Common myeloid progenitor, CD34-positive (primary cell): ENCODE measurements at regions of chr6 and their contacts with region 1.

Region 1: DNA sequence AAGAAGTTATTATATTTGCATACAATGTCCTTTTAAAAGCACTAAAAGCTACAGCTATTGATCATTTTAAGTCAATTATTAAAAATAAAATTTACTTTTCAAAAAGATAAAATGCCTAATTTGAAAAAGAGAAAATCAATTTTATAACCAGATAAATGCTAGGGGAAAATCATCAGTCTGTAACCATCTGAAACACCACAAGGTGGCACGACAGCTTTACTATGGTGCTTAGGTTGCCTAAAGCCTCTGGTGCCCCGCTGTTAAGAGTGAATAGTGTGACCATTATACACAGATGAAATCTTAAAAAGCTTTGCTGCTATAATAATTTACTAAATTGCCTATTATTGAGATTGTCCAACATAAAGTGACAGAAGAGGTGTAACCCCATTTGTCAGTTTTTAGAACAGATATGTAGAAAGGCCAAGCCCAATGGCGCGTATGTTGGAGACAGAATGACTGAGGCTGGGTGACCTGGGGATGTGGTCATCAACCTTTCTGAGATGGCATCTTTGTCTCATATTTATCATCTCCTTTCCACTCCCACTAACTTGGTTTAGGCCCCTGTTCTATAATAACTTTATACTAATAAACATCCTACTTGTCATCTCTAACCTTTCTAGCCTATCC is 100.8 kb downstream of the MOXD1 start:
- DNase-seq: peak; percentile 44 to 72 (median 71)
- H3K4me3 ChIP-seq: no peak overlapping the region
- H3K27ac ChIP-seq: no peak overlapping the region
- H3K4me1 ChIP-seq: no peaks in the 10 kb centered on the region
- H3K27me3 ChIP-seq: peaks cover 0 to 5% (median 0%) of the 10 kb centered on the region in 5 experiments

Region 2: GRCh38 chr6:132270726-132271402 is 29.6 kb before region 1 on chr6:
- CTCF ChIA-PET with region 1: interaction called, 11 read pairs
- POLR2A ChIA-PET with region 1: no interaction called
- DNase-seq: no peak
- H3K4me3 ChIP-seq: no peak overlapping the region
- H3K27ac ChIP-seq: no peak overlapping the region
- H3K4me1 ChIP-seq: peaks cover 0 to 14% (median 0%) of the 10 kb centered on the region in 4 experiments
- H3K27me3 ChIP-seq: peaks cover 0 to 12% (median 2%) of the 10 kb centered on the region in 5 experiments

Region 3: DNA sequence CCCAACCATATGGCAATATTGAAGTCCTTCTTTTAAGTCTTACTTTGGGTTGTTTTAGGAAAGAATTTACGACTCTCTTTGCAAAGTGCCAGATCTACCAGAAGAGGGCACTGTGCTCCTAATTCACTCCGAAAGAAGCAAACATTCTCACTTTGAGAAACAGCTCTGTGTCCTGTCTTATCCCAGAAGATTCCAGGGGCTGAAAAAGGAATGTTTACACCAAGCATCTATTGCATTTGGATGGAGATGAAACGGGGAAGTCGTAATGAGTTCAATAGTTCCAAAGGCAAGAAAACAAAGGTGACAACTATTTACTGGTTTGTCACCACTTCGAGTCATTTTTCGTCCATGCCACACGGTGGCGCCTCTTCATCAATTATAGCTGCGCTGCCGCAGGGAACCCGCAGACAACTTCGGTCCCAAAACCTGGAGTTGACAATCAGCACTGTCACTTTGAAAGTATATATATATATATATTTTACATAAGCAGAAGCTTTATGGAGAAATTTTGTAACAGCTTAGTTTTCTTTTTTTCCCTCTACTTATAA is 20.8 kb before region 1 on chr6:
- CTCF ChIA-PET with region 1: interaction called, 83 read pairs
- POLR2A ChIA-PET with region 1: no interaction called
- DNase-seq: peak; percentile 77 to 87 (median 85)
- H3K4me3 ChIP-seq: peak overlapping the region in 6 of 7 experiments; percentile 61 to 95 (median 70)
- H3K27ac ChIP-seq: no peak overlapping the region
- H3K4me1 ChIP-seq: peaks cover 0 to 3% (median under 1%) of the 10 kb centered on the region in 4 experiments
- H3K27me3 ChIP-seq: peaks cover 0 to 9% (median 0%) of the 10 kb centered on the region in 5 experiments

Region 4: GRCh38 chr6:132286026-132287019 is 14.1 kb before region 1 on chr6:
- CTCF ChIA-PET with region 1: interaction called, 74 read pairs
- POLR2A ChIA-PET with region 1: no interaction called
- DNase-seq: peak; percentile 72 to 96 (median 95)
- H3K4me3 ChIP-seq: no peak overlapping the region
- H3K27ac ChIP-seq: no peak overlapping the region
- H3K4me1 ChIP-seq: peaks cover 0 to 6% (median 4%) of the 10 kb centered on the region in 4 experiments
- H3K27me3 ChIP-seq: peaks cover 0 to 1% (median 0%) of the 10 kb centered on the region in 5 experiments

Region 5: GRCh38 chr6:132483779-132484679 is 183.6 kb after region 1 on chr6:
- CTCF ChIA-PET with region 1: interaction called, 136 read pairs
- POLR2A ChIA-PET with region 1: no interaction called
- DNase-seq: peak; percentile 74 to 87 (median 79)
- H3K4me3 ChIP-seq: no peak overlapping the region
- H3K27ac ChIP-seq: no peak overlapping the region
- H3K4me1 ChIP-seq: peaks cover 4 to 14% (median 7%) of the 10 kb centered on the region in 4 experiments
- H3K27me3 ChIP-seq: no peaks in the 10 kb centered on the region